ENCODE measurements at regions of chr2 and their contacts with region 1.

Region 1: GRCh38 chr2:232327105-232328041 is 51.2 kb upstream of the ALPP start:
- DNase-seq: peak; percentile 73 to 85 (median 77)
- H3K4me3 ChIP-seq: no peak overlapping the region
- H3K4me3 Mint-ChIP-seq: no peak overlapping the region
- H3K27ac ChIP-seq: no peak overlapping the region
- H3K27ac Mint-ChIP-seq: peak overlapping the region in 4 of 7 donors; percentile 41 to 77 (median 52)
- H3K4me1 ChIP-seq: peaks cover 13% of the 10 kb centered on the region
- H3K4me1 Mint-ChIP-seq: peaks cover 6 to 24% (median 10%) of the 10 kb centered on the region in 4 donors
- H3K27me3 ChIP-seq: no peaks in the 10 kb centered on the region
- H3K27me3 Mint-ChIP-seq: no peaks in the 10 kb centered on the region

Region 2: DNA sequence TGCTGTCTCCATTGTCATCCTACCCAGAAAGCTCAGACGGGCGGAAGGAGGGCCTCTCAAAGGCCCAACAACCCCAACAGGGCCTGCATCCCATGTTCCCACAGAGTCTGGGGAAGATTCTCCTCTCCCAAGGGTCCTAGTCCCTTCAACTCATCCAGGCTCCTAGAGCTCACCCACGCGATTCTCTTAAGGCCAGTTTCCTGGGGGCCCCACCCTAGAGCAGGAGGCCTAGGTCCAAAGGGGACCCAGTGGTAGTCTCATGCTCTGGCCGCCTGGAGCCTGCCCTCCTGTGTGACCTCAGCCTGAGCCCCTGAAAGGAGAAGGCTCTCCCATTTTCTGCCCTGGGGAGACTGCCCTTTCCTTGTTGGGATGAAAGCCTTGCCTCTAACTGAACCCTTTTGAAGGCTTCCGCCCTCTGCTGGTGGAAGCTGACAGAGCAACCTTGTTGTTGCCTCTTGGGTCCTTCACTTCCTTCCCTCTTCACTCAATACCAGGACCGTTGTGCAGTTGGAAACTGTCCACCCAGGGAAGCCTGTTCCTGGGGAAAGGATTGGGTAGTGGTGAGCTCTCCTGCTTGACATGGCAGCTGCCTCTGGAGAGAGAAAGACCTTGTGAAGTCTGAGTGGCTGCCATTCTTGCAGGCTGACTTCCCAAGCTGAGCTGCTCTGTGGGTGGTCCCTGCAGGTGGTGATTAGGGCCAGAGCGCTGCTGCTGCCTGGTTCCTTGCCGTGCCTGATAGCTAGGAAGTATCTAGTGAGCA is 34.8 kb before region 1 on chr2:
- CTCF ChIA-PET with region 1: interaction called, 36 read pairs
- POLR2A ChIA-PET with region 1: no interaction called
- intact Hi-C with region 1: loop called (anchors 1 kb)
- DNase-seq: peak in 4 of 5 donors; percentile 26 to 31 (median 28)
- H3K4me3 ChIP-seq: no peak overlapping the region
- H3K4me3 Mint-ChIP-seq: no peak overlapping the region
- H3K27ac ChIP-seq: no peak overlapping the region
- H3K27ac Mint-ChIP-seq: peak overlapping the region in 4 of 7 donors; percentile 11 to 81 (median 51)
- H3K4me1 ChIP-seq: peaks cover 4% of the 10 kb centered on the region
- H3K4me1 Mint-ChIP-seq: peaks cover 0 to 14% (median 4%) of the 10 kb centered on the region in 4 donors
- H3K27me3 ChIP-seq: no peaks in the 10 kb centered on the region
- H3K27me3 Mint-ChIP-seq: no peaks in the 10 kb centered on the region